ENCODE measurements at regions of chr7 and their contacts with region 1.

Region 1: GRCh38 chr7:1004018-1004852 is 21.3 kb downstream of the CYP2W1 start:
- DNase-seq: no peak
- H3K4me3 ChIP-seq: no peak overlapping the region
- H3K27ac ChIP-seq: no peak overlapping the region
- H3K4me1 ChIP-seq: no peaks in the 10 kb centered on the region
- H3K27me3 ChIP-seq: no peaks in the 10 kb centered on the region
- CTCF ChIP-seq: no peak
- EP300 ChIP-seq: no peak
- POLR2A ChIP-seq: no peak

Region 2: DNA sequence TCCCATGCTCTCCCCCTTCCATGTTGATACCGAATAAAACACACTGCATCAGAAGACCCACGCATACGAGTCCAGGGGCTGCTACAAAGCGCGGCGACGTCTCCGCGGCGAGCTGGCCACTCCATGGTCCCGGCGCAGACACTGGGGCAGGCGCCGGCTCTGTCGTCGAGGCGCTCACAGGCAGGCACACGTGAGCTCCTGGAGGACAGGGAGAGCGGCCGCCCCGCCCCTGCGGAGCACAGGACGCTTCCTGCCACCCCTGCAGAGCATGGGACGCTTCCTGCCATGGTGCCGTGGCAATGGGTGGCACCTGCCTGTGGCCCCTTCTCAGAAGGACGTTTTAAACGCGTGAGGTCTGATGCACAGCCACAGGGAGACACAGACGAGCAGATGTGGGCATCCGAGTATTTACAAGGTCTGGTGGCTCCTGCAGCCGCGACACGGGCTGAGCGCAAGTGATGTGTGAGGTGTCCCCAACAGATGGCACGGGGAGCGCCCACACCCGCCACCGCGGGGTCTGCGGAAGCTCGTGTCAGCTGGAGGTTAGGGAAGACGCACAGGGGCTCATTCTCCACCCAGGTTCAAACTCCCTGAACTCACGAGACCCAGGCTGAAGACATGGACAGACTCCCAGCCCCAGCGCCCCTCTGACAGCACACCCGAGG is 18.7 kb after region 1 on chr7:
- in situ Hi-C with region 1: no loop called
- intact Hi-C with region 1: loop called (anchors 1 kb)
- DNase-seq: peak; percentile 37
- H3K4me3 ChIP-seq: no peak overlapping the region
- H3K27ac ChIP-seq: no peak overlapping the region
- H3K4me1 ChIP-seq: peaks cover 5 to 14% (median 9%) of the 10 kb centered on the region in 4 donors
- H3K27me3 ChIP-seq: no peaks in the 10 kb centered on the region
- CTCF ChIP-seq: no peak
- EP300 ChIP-seq: no peak
- POLR2A ChIP-seq: no peak